ENCODE measurements at regions of chr15 and their contacts with region 1.

Region 1: DNA sequence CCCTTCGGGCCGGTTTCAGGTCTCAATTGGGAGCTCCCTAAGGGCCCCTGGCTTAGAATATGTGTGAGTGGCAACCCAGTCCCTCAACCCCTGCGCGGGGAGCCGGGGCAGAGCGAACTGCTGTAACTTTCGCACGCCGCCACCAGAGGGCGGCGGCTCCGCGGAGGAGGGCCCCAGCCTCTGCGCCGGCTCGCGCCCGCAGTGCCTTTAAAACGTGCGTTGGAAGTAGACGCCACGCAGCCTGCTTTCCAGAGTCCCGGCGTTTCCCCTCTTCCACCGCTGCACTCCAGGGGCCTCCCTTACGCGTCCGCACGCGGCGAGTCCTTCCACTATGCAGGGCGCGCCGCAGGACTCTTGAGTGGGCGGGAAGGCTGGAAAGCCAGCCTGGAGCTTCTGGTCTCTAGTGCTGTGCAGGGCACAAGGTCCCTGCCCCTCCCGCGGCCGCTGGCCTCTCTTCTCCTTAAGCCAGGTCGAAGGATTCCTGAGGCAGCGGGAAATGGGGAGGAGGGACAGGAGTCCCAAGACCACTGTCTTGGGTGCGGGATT is 23.7 kb upstream of the RNU6-1 start:
- DNase-seq: peak; percentile 61
- ATAC-seq: peak; percentile 93
- H3K4me3 ChIP-seq: peak overlapping the region; percentile 64
- H3K27ac ChIP-seq: peak overlapping the region; percentile 86
- H3K4me1 ChIP-seq: peaks cover 34% of the 10 kb centered on the region
- H3K27me3 ChIP-seq: no peaks in the 10 kb centered on the region
- CTCF ChIP-seq: peak; percentile 89 to 95 (median 92); a peak in 5 of 6 replicates
- EP300 ChIP-seq: peak in 1 of 2 experiments; percentile 37; a peak in 1 of 4 replicates
- POLR2A ChIP-seq: no peak; the same call in 1 of the 2 replicates
- RAD21 ChIP-seq: peak; percentile 95

Region 2: GRCh38 chr15:67850995-67851571 is 12.4 kb before region 1 on chr15:
- CTCF ChIA-PET with region 1: interaction called, 20 read pairs
- POLR2A ChIA-PET with region 1: interaction called, 3 read pairs
- RAD21 ChIA-PET with region 1: interaction called, 16 read pairs
- SMC1A ChIA-PET with region 1: interaction called, 13 read pairs
- in situ Hi-C with region 1: no loop called
- intact Hi-C with region 1: no loop called
- DNase-seq: peak; percentile 52
- ATAC-seq: peak; percentile 59
- H3K4me3 ChIP-seq: no peak overlapping the region
- H3K27ac ChIP-seq: peak overlapping the region; percentile 11; the same call in 1 of the 2 replicates
- H3K4me1 ChIP-seq: peaks cover 30% of the 10 kb centered on the region
- H3K27me3 ChIP-seq: no peaks in the 10 kb centered on the region
- CTCF ChIP-seq: no peak
- EP300 ChIP-seq: no peak
- POLR2A ChIP-seq: no peak
- RAD21 ChIP-seq: no peak

Region 3: GRCh38 chr15:67945951-67946700 is 82.6 kb after region 1 on chr15:
- CTCF ChIA-PET with region 1: interaction called, 4 read pairs
- POLR2A ChIA-PET with region 1: interaction called, 3 read pairs
- RAD21 ChIA-PET with region 1: interaction called, 6 read pairs
- SMC1A ChIA-PET with region 1: interaction called, 22 read pairs
- in situ Hi-C with region 1: no loop called
- intact Hi-C with region 1: no loop called
- DNase-seq: no peak
- ATAC-seq: peak; percentile 69
- H3K4me3 ChIP-seq: peak overlapping the region; percentile 43
- H3K27ac ChIP-seq: peak overlapping the region; percentile 84
- H3K4me1 ChIP-seq: peaks cover 16% of the 10 kb centered on the region
- H3K27me3 ChIP-seq: no peaks in the 10 kb centered on the region
- CTCF ChIP-seq: no peak
- EP300 ChIP-seq: no peak
- POLR2A ChIP-seq: no peak; the same call in 1 of the 2 replicates
- RAD21 ChIP-seq: no peak

Region 4: GRCh38 chr15:68053701-68054627 is 190.4 kb after region 1 on chr15 and contains the start of gene PIAS1:
- CTCF ChIA-PET with region 1: interaction called, 14 read pairs
- POLR2A ChIA-PET with region 1: interaction called, 18 read pairs
- RAD21 ChIA-PET with region 1: interaction called, 38 read pairs
- SMC1A ChIA-PET with region 1: interaction called, 35 read pairs
- in situ Hi-C with region 1: loop called (anchors 5 kb)
- intact Hi-C with region 1: loop called (anchors 1 kb)
- DNase-seq: peak; percentile 73
- ATAC-seq: peak; percentile 87
- H3K4me3 ChIP-seq: peak within 1 kb of the TSS; percentile 79
- H3K27ac ChIP-seq: peak within 1 kb of the TSS; percentile 88
- H3K4me1 ChIP-seq: peaks cover 6% of the 10 kb centered on the region
- H3K27me3 ChIP-seq: no peaks in the 10 kb centered on the region
- CTCF ChIP-seq: no peak
- EP300 ChIP-seq: no peak
- POLR2A ChIP-seq: peak; percentile 93
- RAD21 ChIP-seq: no peak
- polyA plus RNA-seq, gene PIAS1: 20.2 to 22.2 TPM

Region 5: GRCh38 chr15:68154923-68155559 is 291.5 kb after region 1 on chr15:
- CTCF ChIA-PET with region 1: interaction called, 119 read pairs
- POLR2A ChIA-PET with region 1: interaction called, 3 read pairs
- RAD21 ChIA-PET with region 1: interaction called, 67 read pairs
- SMC1A ChIA-PET with region 1: interaction called, 97 read pairs
- in situ Hi-C with region 1: loop called (anchors 5 kb)
- intact Hi-C with region 1: loop called (anchors 1 kb)
- DNase-seq: no peak
- ATAC-seq: peak; percentile 36; the same call in 1 of the 3 replicates
- H3K4me3 ChIP-seq: no peak overlapping the region
- H3K27ac ChIP-seq: no peak overlapping the region
- H3K4me1 ChIP-seq: no peaks in the 10 kb centered on the region
- H3K27me3 ChIP-seq: no peaks in the 10 kb centered on the region
- CTCF ChIP-seq: peak; percentile 54 to 66 (median 62)
- EP300 ChIP-seq: no peak
- POLR2A ChIP-seq: no peak
- RAD21 ChIP-seq: peak; percentile 91

Region 6: GRCh38 chr15:68229386-68230156 is 366.1 kb after region 1 on chr15 and contains the start of gene CLN6:
- CTCF ChIA-PET with region 1: interaction called, 4 read pairs
- POLR2A ChIA-PET with region 1: no interaction called
- RAD21 ChIA-PET with region 1: interaction called, 13 read pairs
- SMC1A ChIA-PET with region 1: interaction called, 5 read pairs
- in situ Hi-C with region 1: no loop called
- intact Hi-C with region 1: loop called (anchors 5 kb)
- DNase-seq: peak; percentile 48
- ATAC-seq: peak; percentile 84
- H3K4me3 ChIP-seq: peak within 1 kb of the TSS; percentile 99
- H3K27ac ChIP-seq: peak within 1 kb of the TSS; percentile 90
- H3K4me1 ChIP-seq: peaks cover 38% of the 10 kb centered on the region
- H3K27me3 ChIP-seq: no peaks in the 10 kb centered on the region
- CTCF ChIP-seq: no peak
- EP300 ChIP-seq: no peak
- POLR2A ChIP-seq: peak; percentile 87
- RAD21 ChIP-seq: no peak; the same call in 1 of the 2 replicates
- polyA plus RNA-seq, gene CLN6: 0.74 to 1.4 TPM